ENCODE measurements at regions of chr15 and their contacts with region 1.

Region 1: DNA sequence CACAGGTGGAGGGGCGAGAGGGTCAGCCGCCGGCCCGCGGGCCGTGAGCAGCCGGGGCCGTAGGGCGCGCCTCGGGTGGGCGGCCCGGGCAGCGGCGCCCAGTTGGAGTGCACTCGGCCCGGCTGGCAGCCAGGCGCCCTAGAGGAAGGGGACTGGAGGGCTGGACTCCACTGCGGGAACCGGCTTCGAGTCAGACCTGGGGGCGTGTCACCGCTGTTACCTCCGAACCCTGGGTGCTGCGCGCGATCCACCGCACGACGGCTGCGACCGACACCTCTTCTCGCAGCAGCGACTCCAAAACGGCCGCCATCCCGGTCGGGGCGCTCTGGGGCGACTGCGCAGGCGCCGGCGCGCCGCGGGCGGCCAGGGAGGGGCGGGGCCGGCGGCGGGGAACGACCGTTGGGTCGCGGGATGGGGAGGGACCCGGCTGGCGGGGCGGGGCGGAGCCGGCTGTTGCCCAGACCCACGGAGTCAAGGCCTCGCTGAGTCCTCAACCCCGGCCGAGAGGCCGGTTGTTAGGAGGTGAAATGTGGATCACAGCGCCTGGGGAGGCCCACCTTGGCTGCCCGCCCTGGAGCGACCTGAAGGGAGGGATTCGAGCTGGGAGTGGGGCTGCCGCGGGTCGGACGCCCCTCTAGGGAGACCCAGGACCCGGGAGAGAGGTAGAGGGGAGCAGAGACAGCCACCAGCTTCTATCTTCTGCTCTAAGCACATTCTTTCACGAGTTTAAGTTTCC is at the start of gene CDAN1:
- DNase-seq: peak; percentile 94
- ATAC-seq: peak; percentile 94
- H3K4me3 ChIP-seq: peak within 1 kb of the TSS; percentile 38 to 80 (median 66)
- H3K4me3 Mint-ChIP-seq: peak within 1 kb of the TSS; percentile 84
- H3K27ac ChIP-seq: peak within 1 kb of the TSS; percentile 55 to 86
- H3K27ac Mint-ChIP-seq: peak within 1 kb of the TSS; percentile 71
- H3K4me1 ChIP-seq: peaks cover 9 to 18% of the 10 kb centered on the region in 2 donors
- H3K4me1 Mint-ChIP-seq: peaks cover 12% of the 10 kb centered on the region
- H3K27me3 ChIP-seq: no peaks in the 10 kb centered on the region
- H3K27me3 Mint-ChIP-seq: no peaks in the 10 kb centered on the region
- CTCF ChIP-seq: no peak
- total RNA-seq, gene CDAN1: 27.3 and 31.8 TPM in 2 replicates

Region 2: GRCh38 chr15:42018306-42019224 is 718.4 kb before region 1 on chr15:
- CTCF ChIA-PET with region 1: no interaction called
- POLR2A ChIA-PET with region 1: no interaction called
- intact Hi-C with region 1: no loop called
- DNase-seq: no peak
- ATAC-seq: no peak
- H3K4me3 ChIP-seq: no peak overlapping the region
- H3K4me3 Mint-ChIP-seq: no peak overlapping the region
- H3K27ac ChIP-seq: no peak overlapping the region
- H3K27ac Mint-ChIP-seq: no peak overlapping the region
- H3K4me1 ChIP-seq: no peaks in the 10 kb centered on the region
- H3K4me1 Mint-ChIP-seq: no peaks in the 10 kb centered on the region
- H3K27me3 ChIP-seq: no peaks in the 10 kb centered on the region
- H3K27me3 Mint-ChIP-seq: peaks cover 7% of the 10 kb centered on the region
- CTCF ChIP-seq: no peak

Region 3: GRCh38 chr15:42575188-42576039 is 161.5 kb before region 1 on chr15 and contains the start of gene STARD9:
- CTCF ChIA-PET with region 1: no interaction called
- POLR2A ChIA-PET with region 1: no interaction called
- intact Hi-C with region 1: loop called (anchors 2 kb)
- DNase-seq: peak; percentile 98
- ATAC-seq: peak; percentile 88
- H3K4me3 ChIP-seq: peak within 1 kb of the TSS; percentile 61 to 93 (median 88)
- H3K4me3 Mint-ChIP-seq: peak within 1 kb of the TSS; percentile 96
- H3K27ac ChIP-seq: peak within 1 kb of the TSS; percentile 67 to 69
- H3K27ac Mint-ChIP-seq: peak within 1 kb of the TSS; percentile 89
- H3K4me1 ChIP-seq: peaks cover 14 to 15% of the 10 kb centered on the region in 2 donors
- H3K4me1 Mint-ChIP-seq: peaks cover 19% of the 10 kb centered on the region
- H3K27me3 ChIP-seq: peaks cover 0 to 4% (median 0%) of the 10 kb centered on the region in 4 experiments
- H3K27me3 Mint-ChIP-seq: peaks cover 9% of the 10 kb centered on the region
- CTCF ChIP-seq: no peak
- total RNA-seq, gene STARD9: 20.8 and 23.1 TPM in 2 replicates

Region 4: DNA sequence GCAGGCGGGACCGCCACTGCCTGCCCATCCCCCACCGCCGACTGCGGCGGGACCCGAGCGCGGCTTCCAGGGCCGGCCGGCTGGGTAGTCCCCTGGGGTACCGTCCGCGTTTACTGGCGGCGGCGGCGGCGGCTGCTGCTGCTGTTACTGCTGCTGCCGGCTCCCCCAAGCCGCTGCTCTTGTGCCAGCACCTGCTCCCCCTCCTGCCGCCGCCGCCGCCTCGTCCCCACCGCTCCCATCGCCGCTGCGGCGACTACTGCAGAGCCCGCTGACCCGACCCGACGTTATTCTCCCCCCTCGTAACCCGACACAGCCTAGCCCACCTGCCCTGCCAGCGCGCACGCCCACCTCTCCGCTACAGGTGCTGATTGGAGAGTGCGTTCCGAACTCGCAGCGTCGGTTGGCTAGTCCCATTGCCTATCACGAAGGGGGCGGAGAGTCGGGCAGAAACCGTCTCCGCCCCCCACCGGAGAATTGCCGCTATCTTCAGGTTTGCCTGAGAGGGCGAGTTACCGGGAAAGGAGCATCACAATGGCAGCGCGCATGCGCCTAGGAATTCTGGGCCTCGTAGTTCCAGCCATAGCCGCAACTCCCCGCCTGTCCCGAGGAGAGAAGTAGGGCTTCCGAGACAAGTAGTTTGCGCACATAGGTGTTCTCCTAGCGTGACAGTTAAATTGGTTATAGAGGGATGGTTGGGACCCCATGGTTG is 183.7 kb after region 1 on chr15 and contains the start of gene TTBK2:
- CTCF ChIA-PET with region 1: interaction called, 13 read pairs
- POLR2A ChIA-PET with region 1: no interaction called
- intact Hi-C with region 1: loop called (anchors 1 kb)
- DNase-seq: peak; percentile 99
- ATAC-seq: peak; percentile 95
- H3K4me3 ChIP-seq: peak within 1 kb of the TSS; percentile 67 to 94 (median 73)
- H3K4me3 Mint-ChIP-seq: peak within 1 kb of the TSS; percentile 90
- H3K27ac ChIP-seq: peak within 1 kb of the TSS; percentile 41 to 46
- H3K27ac Mint-ChIP-seq: peak within 1 kb of the TSS; percentile 92
- H3K4me1 ChIP-seq: peaks cover 12 to 23% of the 10 kb centered on the region in 2 donors
- H3K4me1 Mint-ChIP-seq: peaks cover 34% of the 10 kb centered on the region
- H3K27me3 ChIP-seq: no peaks in the 10 kb centered on the region
- H3K27me3 Mint-ChIP-seq: no peaks in the 10 kb centered on the region
- CTCF ChIP-seq: peak; percentile 16
- total RNA-seq, gene TTBK2: 38.7 and 39.6 TPM in 2 replicates

Region 5: GRCh38 chr15:43185157-43186017 is 448.4 kb after region 1 on chr15 and contains the start of gene CCNDBP1:
- CTCF ChIA-PET with region 1: no interaction called
- POLR2A ChIA-PET with region 1: no interaction called
- intact Hi-C with region 1: loop called (anchors 1 kb)
- DNase-seq: peak; percentile 92
- ATAC-seq: peak; percentile 93
- H3K4me3 ChIP-seq: peak within 1 kb of the TSS; percentile 43 to 94 (median 75)
- H3K4me3 Mint-ChIP-seq: peak within 1 kb of the TSS; percentile 99
- H3K27ac ChIP-seq: peak within 1 kb of the TSS; percentile 87 to 94
- H3K27ac Mint-ChIP-seq: peak within 1 kb of the TSS; percentile 98
- H3K4me1 ChIP-seq: peaks cover 21 to 32% of the 10 kb centered on the region in 2 donors
- H3K4me1 Mint-ChIP-seq: peaks cover 38% of the 10 kb centered on the region
- H3K27me3 ChIP-seq: no peaks in the 10 kb centered on the region
- H3K27me3 Mint-ChIP-seq: no peaks in the 10 kb centered on the region
- CTCF ChIP-seq: peak; percentile 67
- total RNA-seq, gene CCNDBP1: 113 and 116 TPM in 2 replicates

Region 6: DNA sequence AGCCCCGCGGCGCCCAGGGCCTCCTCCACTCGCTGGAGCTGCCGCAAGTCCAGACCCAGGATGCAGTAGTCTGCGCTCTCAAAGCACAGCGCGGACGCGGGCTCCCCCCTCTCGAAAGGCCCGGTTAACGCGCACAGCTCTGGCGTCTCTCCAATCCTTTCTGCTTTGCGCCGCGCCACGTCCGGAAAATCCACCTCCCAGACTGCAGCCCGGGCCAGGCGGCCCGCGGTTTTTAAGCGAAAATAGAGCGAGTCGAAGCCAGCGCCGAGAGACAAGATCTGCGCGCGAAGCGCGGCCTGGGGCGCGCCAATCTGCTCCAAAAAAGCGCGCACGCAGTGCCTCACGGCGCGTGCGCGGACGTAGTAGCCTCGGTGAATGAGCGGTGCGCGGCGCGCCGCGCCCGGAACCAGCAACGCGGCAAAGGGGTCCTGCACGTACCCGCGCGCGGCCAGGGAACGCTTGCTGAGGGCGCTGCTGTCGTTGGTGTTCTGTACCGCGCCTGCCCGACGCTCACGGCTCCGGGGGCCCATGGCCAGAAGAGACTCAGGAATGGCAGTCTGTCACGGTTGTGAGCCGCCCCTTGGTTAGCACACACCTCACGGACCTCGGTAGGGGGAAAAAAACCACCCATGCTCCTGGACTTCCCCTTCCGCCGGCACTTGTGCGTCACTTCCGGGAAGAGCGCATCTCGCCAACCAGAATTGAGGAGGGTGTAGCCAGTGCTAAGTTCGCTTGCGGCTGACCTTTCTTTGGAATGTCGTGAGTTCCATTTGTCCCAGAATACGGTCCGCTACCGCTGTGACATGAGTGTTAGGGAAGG is 593.2 kb after region 1 on chr15 and contains the start of gene LCMT2:
- CTCF ChIA-PET with region 1: no interaction called
- POLR2A ChIA-PET with region 1: no interaction called
- intact Hi-C with region 1: loop called (anchors 1 kb)
- DNase-seq: peak; percentile 98
- ATAC-seq: peak; percentile 88
- H3K4me3 ChIP-seq: peak within 1 kb of the TSS; percentile 70 to 88 (median 84)
- H3K4me3 Mint-ChIP-seq: peak within 1 kb of the TSS; percentile 99
- H3K27ac ChIP-seq: peak within 1 kb of the TSS; percentile 94 to 98
- H3K27ac Mint-ChIP-seq: peak within 1 kb of the TSS; percentile 100
- H3K4me1 ChIP-seq: peaks cover 22 to 23% of the 10 kb centered on the region in 2 donors
- H3K4me1 Mint-ChIP-seq: peaks cover 32% of the 10 kb centered on the region
- H3K27me3 ChIP-seq: no peaks in the 10 kb centered on the region
- H3K27me3 Mint-ChIP-seq: no peaks in the 10 kb centered on the region
- CTCF ChIP-seq: peak; percentile 9
- total RNA-seq, gene LCMT2: 12.8 and 16.2 TPM in 2 replicates

Region 7: DNA sequence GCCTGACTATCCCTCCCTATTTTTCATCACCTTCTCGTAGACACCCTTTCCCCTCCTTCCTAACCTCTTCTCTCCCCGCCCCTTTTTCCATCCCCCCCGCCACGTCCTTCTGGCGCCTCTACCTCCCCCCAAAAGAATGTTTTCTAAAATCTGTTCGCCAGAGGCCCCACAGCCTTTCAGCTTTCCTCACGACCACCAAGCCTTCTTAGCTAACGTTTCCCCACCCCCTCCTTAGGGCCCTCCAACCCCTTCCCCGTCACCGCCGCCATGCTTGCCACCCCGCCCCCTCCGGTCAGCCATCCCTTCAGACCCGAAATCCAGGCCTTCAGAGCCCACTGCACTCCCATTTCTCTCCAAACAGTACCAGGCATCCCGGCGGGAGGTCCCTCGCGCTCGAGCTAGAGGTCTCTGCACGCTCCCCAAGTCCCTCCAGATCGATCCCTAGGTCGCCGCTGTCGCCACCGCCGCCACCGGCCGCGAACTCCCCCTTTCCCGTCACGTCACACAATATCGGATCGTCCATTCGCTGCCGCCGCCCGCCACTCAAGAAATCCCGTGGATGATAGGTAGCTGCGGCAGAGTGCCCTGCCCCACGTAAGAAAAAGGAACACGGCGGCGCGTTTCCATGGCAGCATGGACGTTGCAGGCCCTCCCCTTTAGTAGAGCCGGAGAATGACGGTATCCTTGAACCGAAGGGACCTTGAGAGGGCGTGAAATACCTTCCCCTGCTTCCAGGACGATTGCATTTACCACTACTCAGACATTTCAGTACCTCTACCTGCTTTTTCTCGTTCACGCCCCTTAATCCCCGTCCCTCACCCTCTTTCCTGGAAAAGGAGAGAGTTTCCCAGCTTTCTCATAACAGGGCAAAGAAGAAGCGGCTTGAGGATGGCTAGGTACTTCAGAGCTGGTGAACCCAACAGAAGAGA is 756.0 kb after region 1 on chr15 and contains the start of gene TP53BP1:
- CTCF ChIA-PET with region 1: no interaction called
- POLR2A ChIA-PET with region 1: no interaction called
- intact Hi-C with region 1: loop called (anchors 10 kb)
- DNase-seq: peak; percentile 96
- ATAC-seq: peak; percentile 99
- H3K4me3 ChIP-seq: peak within 1 kb of the TSS; percentile 76 to 92 (median 80)
- H3K4me3 Mint-ChIP-seq: peak within 1 kb of the TSS; percentile 92
- H3K27ac ChIP-seq: peak within 1 kb of the TSS; percentile 70 to 98
- H3K27ac Mint-ChIP-seq: peak within 1 kb of the TSS; percentile 95
- H3K4me1 ChIP-seq: peaks cover 11% of the 10 kb centered on the region in 2 donors
- H3K4me1 Mint-ChIP-seq: peaks cover 23% of the 10 kb centered on the region
- H3K27me3 ChIP-seq: no peaks in the 10 kb centered on the region
- H3K27me3 Mint-ChIP-seq: no peaks in the 10 kb centered on the region
- CTCF ChIP-seq: no peak
- total RNA-seq, gene TP53BP1: 70.5 and 88.4 TPM in 2 replicates